ENCODE measurements at regions of chr2 and their contacts with region 1.

Region 1: DNA sequence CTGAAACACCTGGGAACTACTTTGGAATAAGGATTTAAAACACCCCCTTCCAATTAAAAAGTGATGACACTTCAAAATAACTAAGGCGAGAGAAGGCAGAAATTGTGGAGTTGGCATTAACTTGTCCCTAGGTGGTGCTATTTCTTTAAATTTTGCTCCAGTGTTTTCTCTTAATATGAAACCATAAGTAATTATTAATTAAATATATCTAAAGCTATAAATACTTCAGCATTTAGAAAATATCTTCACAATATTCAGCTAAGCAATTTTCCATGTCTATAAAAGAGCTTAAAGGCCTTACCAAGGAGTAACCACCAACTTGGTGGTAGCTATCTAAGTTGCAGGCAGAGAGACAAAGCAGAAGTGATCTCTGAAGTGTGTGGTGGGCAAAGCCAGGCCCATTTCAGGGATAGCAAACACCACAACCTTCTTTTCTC is 186.8 kb upstream of the PGAP1 start:
- DNase-seq: peak; percentile 24 to 26
- ATAC-seq: peak in 1 of 2 experiments; percentile 74; a peak in 2 of 6 replicates
- H3K4me3 ChIP-seq: no peak overlapping the region
- H3K27ac ChIP-seq: no peak overlapping the region
- H3K4me1 ChIP-seq: peaks cover 7% of the 10 kb centered on the region; the same call in 1 of the 3 replicates
- CTCF ChIP-seq: peak; percentile 87
- EP300 ChIP-seq: no peak
- POLR2A ChIP-seq: no peak
- RAD21 ChIP-seq: peak; percentile 79 to 90

Region 2: GRCh38 chr2:197128126-197128525 is 14.8 kb after region 1 on chr2:
- CTCF ChIA-PET with region 1: interaction called, 27 read pairs
- POLR2A ChIA-PET with region 1: no interaction called
- DNase-seq: no peak
- ATAC-seq: no peak
- H3K4me3 ChIP-seq: no peak overlapping the region
- H3K27ac ChIP-seq: no peak overlapping the region
- H3K4me1 ChIP-seq: no peaks in the 10 kb centered on the region
- CTCF ChIP-seq: no peak
- EP300 ChIP-seq: no peak
- POLR2A ChIP-seq: no peak
- RAD21 ChIP-seq: no peak

Region 3: GRCh38 chr2:197168705-197169104 is 55.4 kb after region 1 on chr2:
- CTCF ChIA-PET with region 1: interaction called, 26 read pairs
- POLR2A ChIA-PET with region 1: no interaction called
- DNase-seq: peak; percentile 52 to 75
- ATAC-seq: peak; percentile 87 to 99
- H3K4me3 ChIP-seq: no peak overlapping the region
- H3K27ac ChIP-seq: no peak overlapping the region
- H3K4me1 ChIP-seq: no peaks in the 10 kb centered on the region
- CTCF ChIP-seq: peak; percentile 54
- EP300 ChIP-seq: no peak
- POLR2A ChIP-seq: no peak
- RAD21 ChIP-seq: peak; percentile 63 to 75

Region 4: GRCh38 chr2:197310271-197310985 is 197.1 kb after region 1 on chr2 and contains the start of gene ANKRD44:
- CTCF ChIA-PET with region 1: interaction called, 23 read pairs
- POLR2A ChIA-PET with region 1: no interaction called
- DNase-seq: peak; percentile 76 to 83
- ATAC-seq: peak; percentile 97 to 99
- H3K4me3 ChIP-seq: peak within 1 kb of the TSS; percentile 97
- H3K27ac ChIP-seq: peak within 1 kb of the TSS; percentile 83 to 85
- H3K4me1 ChIP-seq: peaks cover 8% of the 10 kb centered on the region; the same call in 2 of the 3 replicates
- CTCF ChIP-seq: peak; percentile 66
- EP300 ChIP-seq: no peak
- POLR2A ChIP-seq: peak; percentile 29; the same call in 1 of the 2 replicates
- RAD21 ChIP-seq: peak; percentile 54 to 71
- polyA plus RNA-seq, gene ANKRD44: 5.9 and 7.9 TPM in 2 replicates

Region 5: DNA sequence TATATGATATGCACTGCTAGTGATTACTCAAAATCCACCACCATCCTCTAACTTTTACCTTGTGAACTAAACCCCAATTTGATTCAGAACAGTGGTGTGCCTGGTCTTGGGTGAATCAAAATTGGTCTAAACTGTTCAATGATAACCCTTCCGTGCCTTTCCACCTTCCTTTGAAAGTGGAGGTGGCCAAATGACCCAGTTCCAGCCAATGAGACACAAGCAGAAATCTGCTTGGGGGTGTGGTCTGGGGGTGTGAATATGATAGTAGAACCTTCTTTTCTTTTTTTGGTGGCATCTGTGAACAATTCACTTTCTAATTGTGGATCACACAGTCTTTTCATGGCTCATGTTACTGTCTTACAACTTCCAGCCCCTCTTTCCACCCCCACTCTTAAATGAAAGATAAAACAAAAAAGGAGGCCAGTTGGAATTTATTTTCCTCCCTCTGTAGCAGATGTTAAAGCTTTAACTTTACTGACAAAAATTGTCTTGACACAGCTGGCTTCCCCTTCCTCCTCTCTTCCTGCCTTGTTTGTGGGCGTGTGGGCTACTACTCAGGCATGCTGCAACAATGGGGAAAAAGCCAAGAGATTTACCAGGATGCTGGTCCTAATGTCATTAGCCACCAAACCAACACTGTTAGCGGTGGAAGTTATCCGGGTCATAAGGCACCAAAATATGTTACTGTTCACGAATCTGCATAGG is 256.1 kb after region 1 on chr2:
- CTCF ChIA-PET with region 1: interaction called, 32 read pairs
- POLR2A ChIA-PET with region 1: no interaction called
- DNase-seq: no peak
- ATAC-seq: no peak
- H3K4me3 ChIP-seq: no peak overlapping the region
- H3K27ac ChIP-seq: no peak overlapping the region
- H3K4me1 ChIP-seq: no peaks in the 10 kb centered on the region
- CTCF ChIP-seq: no peak
- EP300 ChIP-seq: no peak
- POLR2A ChIP-seq: no peak
- RAD21 ChIP-seq: no peak

Region 6: GRCh38 chr2:197383823-197384222 is 270.5 kb after region 1 on chr2:
- CTCF ChIA-PET with region 1: interaction called, 24 read pairs
- POLR2A ChIA-PET with region 1: no interaction called
- DNase-seq: peak in 1 of 2 experiments; percentile 6
- ATAC-seq: peak in 1 of 2 experiments; percentile 57; a peak in 3 of 6 replicates
- H3K4me3 ChIP-seq: no peak overlapping the region
- H3K27ac ChIP-seq: no peak overlapping the region
- H3K4me1 ChIP-seq: no peaks in the 10 kb centered on the region
- CTCF ChIP-seq: no peak
- EP300 ChIP-seq: no peak
- POLR2A ChIP-seq: no peak
- RAD21 ChIP-seq: peak in 1 of 2 experiments; percentile 9; a peak in 1 of 5 replicates

Measured in A549 (cell line).